Activated CD8-positive, alpha-beta T cell treated with anti-CD3 and anti-CD28 coated beads for 36 hours (primary cell): ENCODE measurements at regions of chr7 and their contacts with region 1.

Region 1: DNA sequence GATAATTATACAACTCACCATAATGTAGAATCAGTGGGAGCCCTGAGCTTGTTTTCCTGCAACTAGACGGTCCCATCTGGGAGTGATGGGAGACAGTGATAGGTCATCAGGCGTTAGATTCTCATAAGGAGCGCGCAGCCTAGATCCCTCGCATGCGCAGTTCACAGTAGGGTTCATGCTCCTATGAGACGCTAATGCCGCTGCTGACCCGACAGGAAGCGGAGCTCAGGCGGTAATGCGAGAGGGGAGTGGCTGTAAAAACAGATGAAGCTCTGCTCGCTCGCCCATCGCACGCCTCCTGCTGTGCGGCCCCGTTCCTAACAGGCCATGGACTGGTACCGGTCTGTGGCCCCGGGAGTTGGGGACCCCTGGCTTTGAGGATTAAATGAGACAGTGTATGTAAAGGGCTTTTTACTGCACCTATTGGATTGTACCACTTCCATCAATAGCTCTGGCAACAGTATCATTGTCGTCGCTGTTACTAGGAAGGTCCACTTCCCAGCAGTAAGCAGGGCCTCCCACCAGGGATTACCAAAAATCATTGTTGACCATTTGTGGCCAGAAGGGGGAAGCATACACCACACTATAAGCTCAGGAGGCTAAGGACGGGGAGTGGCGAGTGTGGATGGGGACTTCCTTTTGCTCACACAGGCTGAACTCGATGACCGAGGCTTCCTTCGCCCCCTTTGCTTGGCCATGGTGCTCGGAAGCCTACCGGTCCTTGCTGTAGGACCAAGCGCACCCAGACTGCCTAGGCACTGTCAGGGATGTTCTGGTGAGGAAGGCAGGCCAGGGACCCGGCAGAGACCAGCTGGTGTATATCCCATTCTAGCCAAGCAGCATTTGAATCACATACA is 26.4 kb downstream of the AKR1B1 start:
- DNase-seq: peak; percentile 87
- ATAC-seq: peak; percentile 95
- H3K4me3 Mint-ChIP-seq: peak overlapping the region; percentile 73
- H3K27ac Mint-ChIP-seq: peak overlapping the region; percentile 86
- H3K4me1 Mint-ChIP-seq: peaks cover 12% of the 10 kb centered on the region
- H3K27me3 Mint-ChIP-seq: no peaks in the 10 kb centered on the region
- CTCF ChIP-seq: peak; percentile 75

Region 2: DNA sequence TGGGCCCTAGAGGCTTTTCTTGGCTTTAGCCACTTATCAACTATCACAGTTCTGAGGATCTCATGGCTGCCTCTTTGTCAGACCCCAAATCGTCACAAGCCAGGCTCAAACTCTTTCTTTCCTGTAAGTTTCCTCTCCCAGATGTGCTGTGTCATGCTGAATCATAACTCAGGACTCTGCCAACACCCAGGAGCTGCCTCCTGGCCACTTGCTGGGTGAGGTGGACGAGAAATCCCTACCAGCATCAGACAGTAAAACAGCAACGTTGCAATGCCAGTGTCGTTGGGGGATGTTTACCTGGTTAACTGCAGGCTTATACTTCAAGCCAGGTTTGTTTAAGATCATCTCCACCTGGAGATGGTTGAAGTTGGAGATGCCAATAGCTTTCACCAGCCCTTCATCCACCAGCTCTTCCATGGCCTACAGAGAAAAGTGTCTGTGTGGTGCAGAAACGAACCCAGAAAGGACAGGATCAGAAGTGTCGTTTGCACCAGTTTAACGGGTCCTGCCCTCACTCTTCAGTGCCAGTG is 16.2 kb after region 1 on chr7:
- CTCF ChIA-PET with region 1: interaction called, 13 read pairs
- POLR2A ChIA-PET with region 1: no interaction called
- intact Hi-C with region 1: no loop called
- DNase-seq: no peak
- ATAC-seq: no peak
- H3K4me3 Mint-ChIP-seq: no peak overlapping the region
- H3K27ac Mint-ChIP-seq: no peak overlapping the region
- H3K4me1 Mint-ChIP-seq: peaks cover 6% of the 10 kb centered on the region
- H3K27me3 Mint-ChIP-seq: no peaks in the 10 kb centered on the region
- CTCF ChIP-seq: no peak

Region 3: GRCh38 chr7:134458806-134459698 is 26.5 kb after region 1 on chr7 and contains the start of gene AKR1B1:
- CTCF ChIA-PET with region 1: interaction called, 26 read pairs
- POLR2A ChIA-PET with region 1: no interaction called
- intact Hi-C with region 1: loop called (anchors 1 kb)
- DNase-seq: peak; percentile 94
- ATAC-seq: peak; percentile 92
- H3K4me3 Mint-ChIP-seq: peak within 1 kb of the TSS; percentile 85
- H3K27ac Mint-ChIP-seq: peak within 1 kb of the TSS; percentile 78
- H3K4me1 Mint-ChIP-seq: peaks cover 46% of the 10 kb centered on the region
- H3K27me3 Mint-ChIP-seq: no peaks in the 10 kb centered on the region
- CTCF ChIP-seq: peak; percentile 50
- total RNA-seq, gene AKR1B1: 106 to 108 TPM

Region 4: DNA sequence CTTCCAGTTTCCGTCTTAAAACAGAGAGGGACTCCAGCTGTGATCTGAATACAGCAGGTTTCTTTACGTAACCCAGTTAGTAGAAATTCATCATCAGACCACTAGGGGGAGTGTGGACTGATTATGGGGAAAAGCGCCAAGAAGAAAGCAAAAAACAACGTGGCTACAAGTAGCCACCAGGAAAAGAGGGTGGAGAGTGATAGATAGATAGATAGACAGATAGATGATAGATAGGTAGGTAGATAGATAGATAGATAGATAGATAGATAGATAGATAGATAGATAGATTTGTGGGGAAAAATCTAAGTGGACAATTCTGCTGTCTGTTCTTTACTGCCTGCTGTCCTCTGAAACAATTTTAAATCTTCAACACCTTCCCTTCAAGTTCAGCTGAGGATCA is 82.1 kb after region 1 on chr7:
- CTCF ChIA-PET with region 1: interaction called, 33 read pairs
- POLR2A ChIA-PET with region 1: interaction called, 3 read pairs
- intact Hi-C with region 1: loop called (anchors 2 kb)
- DNase-seq: peak; percentile 23
- ATAC-seq: peak; percentile 82
- H3K4me3 Mint-ChIP-seq: no peak overlapping the region
- H3K27ac Mint-ChIP-seq: no peak overlapping the region
- H3K4me1 Mint-ChIP-seq: peaks cover 9% of the 10 kb centered on the region
- H3K27me3 Mint-ChIP-seq: peaks cover 10% of the 10 kb centered on the region
- CTCF ChIP-seq: peak; percentile 78

Region 5: DNA sequence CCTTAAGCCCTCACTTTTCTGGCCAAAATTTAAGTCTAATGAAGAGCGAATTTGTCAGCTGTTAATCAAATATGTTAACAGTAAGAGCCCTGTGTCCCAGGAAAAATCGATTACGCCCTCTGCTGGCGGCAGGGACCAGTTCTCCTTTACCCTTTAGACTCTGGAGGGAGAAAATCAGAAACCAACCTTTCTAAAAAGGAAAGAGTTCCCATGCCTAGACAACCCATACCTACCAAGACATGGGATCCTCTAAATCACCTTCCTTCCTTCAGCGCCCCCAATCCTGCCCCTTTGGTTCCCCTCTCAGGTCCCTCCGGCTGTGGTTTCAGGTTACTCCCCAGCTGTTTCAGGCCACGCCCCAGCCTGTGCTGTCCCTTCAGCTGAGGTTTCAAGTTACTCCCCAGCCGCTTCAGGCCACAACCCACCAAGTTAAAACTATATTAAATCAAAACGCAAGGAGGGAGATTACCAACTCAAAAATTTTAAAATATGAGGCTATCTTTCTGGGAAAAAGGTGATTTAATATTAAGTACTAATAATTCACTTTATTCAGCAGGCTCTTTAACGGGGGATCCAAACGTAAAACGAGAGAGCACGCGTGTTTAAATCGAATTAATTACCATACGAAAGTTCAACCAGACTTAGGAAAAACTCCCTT is 115.0 kb after region 1 on chr7:
- CTCF ChIA-PET with region 1: interaction called, 41 read pairs
- POLR2A ChIA-PET with region 1: no interaction called
- intact Hi-C with region 1: loop called (anchors 2 kb)
- DNase-seq: peak; percentile 80
- ATAC-seq: peak; percentile 83
- H3K4me3 Mint-ChIP-seq: no peak overlapping the region
- H3K27ac Mint-ChIP-seq: no peak overlapping the region
- H3K4me1 Mint-ChIP-seq: no peaks in the 10 kb centered on the region
- H3K27me3 Mint-ChIP-seq: peaks cover 16% of the 10 kb centered on the region
- CTCF ChIP-seq: peak; percentile 74

Region 6: GRCh38 chr7:134605973-134606923 is 173.7 kb after region 1 on chr7:
- CTCF ChIA-PET with region 1: interaction called, 75 read pairs
- POLR2A ChIA-PET with region 1: no interaction called
- intact Hi-C with region 1: loop called (anchors 5 kb)
- DNase-seq: peak; percentile 76
- ATAC-seq: peak; percentile 98
- H3K4me3 Mint-ChIP-seq: no peak overlapping the region
- H3K27ac Mint-ChIP-seq: no peak overlapping the region
- H3K4me1 Mint-ChIP-seq: peaks cover 3% of the 10 kb centered on the region
- H3K27me3 Mint-ChIP-seq: peaks cover 28% of the 10 kb centered on the region
- CTCF ChIP-seq: peak; percentile 89

Region 7: DNA sequence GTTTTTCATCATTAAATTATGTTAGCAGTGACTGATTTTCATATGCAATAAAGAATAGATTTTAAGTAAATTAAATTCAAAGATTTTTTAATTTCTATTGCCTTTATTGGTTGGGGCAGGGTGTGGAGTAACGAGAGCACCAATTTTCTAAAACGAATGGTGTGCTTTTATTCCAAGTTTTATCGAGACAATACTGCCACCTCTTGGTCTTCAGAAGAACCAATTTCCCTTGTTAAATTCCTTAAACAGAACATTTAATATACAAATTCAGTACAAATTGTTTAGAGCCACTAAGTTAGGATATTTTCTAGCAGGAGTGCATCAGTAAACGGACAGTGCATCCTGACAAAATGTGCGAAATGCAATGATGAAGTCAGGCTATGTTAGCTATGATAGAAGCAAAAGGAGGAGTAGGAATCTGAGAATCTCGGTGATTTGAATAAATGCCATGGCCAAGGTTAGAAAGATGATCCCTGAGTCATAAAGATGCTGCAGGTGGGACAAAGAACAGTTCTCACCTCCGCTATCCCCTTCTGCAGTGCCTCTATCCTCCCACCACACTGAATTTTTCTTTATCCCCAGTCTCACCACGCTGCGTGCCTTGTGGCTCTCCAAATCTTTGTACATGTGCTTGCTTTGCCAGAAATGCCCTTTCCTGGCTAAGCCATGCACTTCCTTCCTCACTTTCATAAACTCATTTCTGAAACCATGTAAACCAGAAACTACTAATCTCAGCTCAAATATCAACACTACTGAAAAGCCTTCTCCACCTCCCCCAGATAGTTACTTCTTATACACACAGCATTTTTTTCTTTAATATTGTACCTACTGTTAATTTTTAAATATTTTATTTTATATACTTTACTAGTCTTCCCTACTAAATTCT is 521.9 kb after region 1 on chr7:
- CTCF ChIA-PET with region 1: no interaction called
- POLR2A ChIA-PET with region 1: no interaction called
- intact Hi-C with region 1: loop called (anchors 10 kb)
- DNase-seq: no peak
- ATAC-seq: no peak
- H3K4me3 Mint-ChIP-seq: no peak overlapping the region
- H3K27ac Mint-ChIP-seq: no peak overlapping the region
- H3K4me1 Mint-ChIP-seq: no peaks in the 10 kb centered on the region
- H3K27me3 Mint-ChIP-seq: no peaks in the 10 kb centered on the region
- CTCF ChIP-seq: peak; percentile 77